AG04450 (cell line): ENCODE measurements at regions of chr16 and their contacts with region 1.

Region 1: GRCh38 chr16:27779641-27780164 is 229.8 kb downstream of the KATNIP start:
- DNase-seq: no peak
- H3K4me3 ChIP-seq: no peak overlapping the region
- H3K27ac ChIP-seq: no peak overlapping the region
- H3K27me3 ChIP-seq: no peaks in the 10 kb centered on the region
- CTCF ChIP-seq: peak; percentile 75

Region 2: GRCh38 chr16:27790546-27791403 is 11.1 kb after region 1 on chr16:
- CTCF ChIA-PET with region 1: interaction called, 13 read pairs
- POLR2A ChIA-PET with region 1: no interaction called
- DNase-seq: no peak
- H3K4me3 ChIP-seq: no peak overlapping the region
- H3K27ac ChIP-seq: no peak overlapping the region
- H3K27me3 ChIP-seq: no peaks in the 10 kb centered on the region
- CTCF ChIP-seq: no peak